ENCODE measurements at regions of chr21 and their contacts with region 1.

Region 1: DNA sequence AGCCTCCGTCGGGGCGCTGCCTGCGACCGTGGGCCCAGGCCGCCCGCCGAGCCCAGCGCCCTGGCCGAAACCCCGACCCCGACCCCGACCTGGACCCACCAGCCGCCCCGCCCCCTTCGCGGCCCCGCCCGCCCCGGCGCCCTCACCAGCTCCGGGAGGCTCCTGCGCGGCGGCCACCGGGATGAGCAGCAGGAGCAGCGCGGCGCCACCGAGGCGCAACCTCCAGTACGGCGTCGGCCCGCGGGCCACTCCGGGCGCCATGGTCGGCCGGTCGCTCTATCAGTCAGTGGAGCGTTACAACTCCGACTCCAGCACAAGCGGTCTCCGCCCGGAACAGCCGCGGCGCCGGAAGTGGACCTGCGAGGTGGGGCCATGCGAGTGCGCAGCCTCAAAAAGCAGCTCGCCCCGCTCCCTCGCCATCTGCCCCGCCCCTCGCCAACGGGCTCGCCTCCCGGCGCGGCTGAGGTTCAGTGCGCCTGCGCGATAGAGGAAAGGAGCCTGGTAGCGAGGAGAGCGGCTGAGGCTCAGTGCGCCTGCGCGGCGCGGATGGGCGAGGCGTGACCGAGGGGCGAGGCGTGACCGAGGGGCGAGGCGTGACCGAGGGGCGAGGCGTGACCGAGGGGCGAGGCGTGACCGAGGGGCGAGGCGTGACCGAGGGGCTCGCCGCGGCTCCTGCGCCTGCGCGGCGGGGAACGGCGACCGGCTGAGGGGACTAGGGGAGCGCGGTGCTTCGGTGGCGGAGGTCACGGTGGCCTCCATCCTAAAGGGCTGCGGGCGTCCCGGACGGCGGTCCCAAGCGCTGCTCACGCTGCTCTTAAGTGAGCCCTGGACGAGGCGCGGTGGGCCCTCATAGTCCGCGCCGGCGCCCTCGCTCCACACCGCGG is at the start of gene PTTG1IP:
- DNase-seq: peak; percentile 94 to 99 (median 96)

Region 2: DNA sequence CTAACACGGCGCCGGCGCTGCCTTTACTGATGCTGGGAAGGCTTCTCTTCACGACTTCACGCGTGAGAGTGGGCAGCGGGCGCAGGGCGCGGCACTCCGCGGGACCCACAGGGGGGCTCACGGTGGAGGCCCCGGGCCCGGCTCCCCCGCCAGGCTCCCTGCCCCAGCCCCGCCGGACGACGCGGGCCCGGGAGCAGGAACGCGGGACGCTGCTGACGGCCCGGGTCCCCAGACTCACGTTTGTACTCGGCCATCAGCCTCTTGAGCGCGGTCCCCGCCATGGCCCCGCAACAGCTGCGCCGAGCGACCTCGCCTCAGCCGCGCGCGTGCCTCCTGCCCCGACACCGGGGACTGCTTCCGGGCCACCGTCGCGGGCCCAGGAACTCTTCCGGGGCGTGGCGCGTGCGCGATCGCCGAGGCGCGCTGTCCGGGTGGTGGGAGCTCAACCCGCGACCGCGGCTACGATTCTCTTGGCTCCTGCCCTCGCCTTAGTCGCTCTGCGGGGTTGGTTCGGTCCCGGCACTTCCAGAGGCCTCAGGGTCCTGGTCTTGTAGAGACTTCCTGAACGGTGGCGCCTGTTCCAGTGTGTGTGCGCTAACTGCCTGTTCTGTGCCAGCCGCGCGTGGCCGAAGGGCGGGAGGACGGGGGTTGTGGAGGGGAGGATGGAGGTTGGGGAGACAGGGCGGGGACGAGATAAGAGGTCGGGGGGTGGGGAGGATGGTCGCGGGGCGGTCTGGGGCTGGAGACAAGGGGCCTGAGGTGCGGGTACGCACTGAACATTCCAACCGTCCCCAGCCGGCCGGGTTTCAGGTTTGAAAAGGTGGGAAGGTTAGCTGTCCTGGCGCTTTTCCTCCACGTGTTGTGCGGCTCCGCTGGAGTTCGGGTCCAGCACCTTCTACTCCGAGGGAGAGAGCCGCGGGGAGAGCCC is 71.9 kb before region 1 on chr21 and contains the start of gene UBE2G2:
- intact Hi-C with region 1: loop called (anchors 5 kb)
- DNase-seq: peak; percentile 73 to 97 (median 82)

Region 3: DNA sequence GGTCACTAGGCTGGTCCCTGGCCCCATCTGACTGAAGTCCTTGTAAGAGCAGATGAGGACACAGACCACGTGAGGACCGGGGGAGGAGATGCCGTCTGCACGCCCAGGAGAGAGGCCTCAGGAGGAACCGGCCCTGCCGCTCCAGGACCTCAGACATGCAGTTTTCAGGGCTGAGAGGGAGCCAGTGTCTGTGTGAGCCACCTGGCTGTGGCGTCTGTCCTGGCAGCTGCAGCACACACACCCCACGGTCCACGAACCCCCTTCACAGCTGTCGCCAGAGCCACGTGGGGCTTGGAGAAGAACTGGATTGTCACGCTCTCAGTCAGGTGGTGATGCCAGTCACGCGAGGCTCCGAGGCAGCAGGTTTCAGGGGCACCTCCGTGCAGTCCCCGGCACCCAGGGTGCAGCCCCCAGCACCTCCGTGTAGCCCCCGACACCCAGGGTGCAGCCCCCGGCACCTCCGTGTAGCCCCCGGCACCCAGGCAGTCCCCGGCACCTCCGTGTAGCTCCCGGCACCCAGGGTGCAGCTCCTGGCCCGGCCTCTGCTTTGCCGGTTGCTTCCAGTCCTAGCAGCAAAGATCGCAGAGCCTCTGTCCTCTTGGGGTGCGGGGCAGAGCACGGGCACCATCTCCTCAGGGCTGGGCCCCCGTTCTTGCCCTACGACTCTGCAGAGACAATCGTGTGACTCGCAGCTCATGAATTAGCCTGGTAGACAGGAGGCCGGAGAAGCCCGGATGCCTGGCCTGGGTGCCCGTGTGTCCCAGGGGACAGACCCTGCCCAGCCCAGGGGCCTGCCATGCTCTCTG is 36.7 kb before region 1 on chr21:
- intact Hi-C with region 1: no loop called
- DNase-seq: peak in 3 of 10 donors; percentile 77 to 83 (median 80)

Measured in posterior cingulate gyrus (tissue), 11 donors.